ENCODE measurements at regions of chr10 and their contacts with region 1.

Region 1: DNA sequence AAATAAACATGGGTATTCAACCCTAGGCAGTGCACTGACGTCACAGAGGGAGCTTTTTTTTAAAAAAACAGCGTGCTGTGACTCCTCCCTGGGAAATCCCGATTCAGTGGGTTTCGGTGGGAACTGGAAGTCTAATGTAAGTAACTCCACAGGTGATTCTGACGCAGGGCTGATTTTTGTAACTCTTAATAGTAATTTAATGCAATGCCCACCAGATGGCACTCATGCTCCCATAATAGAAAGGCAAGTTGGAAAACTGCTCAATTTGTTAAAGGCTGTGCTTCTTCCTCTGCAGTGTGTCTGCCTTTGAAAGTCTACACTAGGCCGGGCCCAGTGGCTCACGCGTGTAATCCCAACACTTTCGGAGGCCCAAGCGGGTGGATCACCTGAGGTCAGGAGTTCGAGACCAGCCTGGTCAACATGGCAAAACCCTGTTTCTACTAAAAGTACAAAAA is 10.9 kb upstream of the RSU1 start:
- H3K4me3 ChIP-seq: no peak overlapping the region
- H3K27ac ChIP-seq: no peak overlapping the region
- H3K4me1 ChIP-seq: no peaks in the 10 kb centered on the region
- CTCF ChIP-seq: 0 out of 2 replicates have a peak, but pooled peaks have one; percentile 7

Region 2: DNA sequence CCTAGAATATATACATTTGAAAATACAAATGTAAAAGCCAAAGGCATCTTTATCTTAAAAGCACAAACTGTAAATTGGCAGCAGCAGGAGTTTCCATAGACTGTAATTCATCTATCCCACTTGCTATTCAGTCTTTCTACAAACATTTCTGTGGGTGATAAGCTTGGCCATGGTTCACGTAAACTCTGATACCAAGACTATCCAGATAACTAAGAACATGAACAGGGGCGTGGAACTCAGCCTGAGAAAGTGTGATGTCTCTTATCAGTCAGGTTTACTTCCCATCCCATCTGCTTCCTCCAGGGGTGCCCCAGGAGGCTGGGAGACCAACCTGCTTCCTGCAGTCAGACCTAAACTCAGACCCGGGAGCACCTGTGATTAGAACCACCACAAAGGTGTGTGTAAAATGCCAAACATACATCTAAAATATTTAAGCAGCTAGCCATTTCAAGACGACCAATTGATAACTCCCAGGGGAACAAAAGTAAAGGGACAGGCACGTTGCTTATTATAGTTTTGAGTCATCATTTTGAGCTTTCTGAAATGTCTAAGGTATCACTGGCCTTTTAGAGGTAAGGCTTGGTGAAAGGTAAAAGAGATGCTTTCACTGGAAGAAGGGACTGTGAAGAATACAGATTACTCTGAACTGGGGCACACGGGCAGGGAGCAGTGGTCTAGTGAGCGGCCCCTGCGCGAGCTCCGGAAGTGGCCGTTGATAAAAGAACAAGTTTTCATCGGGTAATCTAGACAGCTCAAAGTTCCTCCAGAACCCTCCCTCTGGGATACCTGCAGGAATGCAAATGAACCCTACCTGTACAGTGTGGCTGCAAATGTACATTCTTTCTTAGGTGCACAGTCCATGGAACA is 62.4 kb before region 1 on chr10:
- CTCF ChIA-PET with region 1: no interaction called
- POLR2A ChIA-PET with region 1: no interaction called
- H3K4me3 ChIP-seq: no peak overlapping the region
- H3K27ac ChIP-seq: no peak overlapping the region
- H3K4me1 ChIP-seq: no peaks in the 10 kb centered on the region
- CTCF ChIP-seq: no peak

Region 3: DNA sequence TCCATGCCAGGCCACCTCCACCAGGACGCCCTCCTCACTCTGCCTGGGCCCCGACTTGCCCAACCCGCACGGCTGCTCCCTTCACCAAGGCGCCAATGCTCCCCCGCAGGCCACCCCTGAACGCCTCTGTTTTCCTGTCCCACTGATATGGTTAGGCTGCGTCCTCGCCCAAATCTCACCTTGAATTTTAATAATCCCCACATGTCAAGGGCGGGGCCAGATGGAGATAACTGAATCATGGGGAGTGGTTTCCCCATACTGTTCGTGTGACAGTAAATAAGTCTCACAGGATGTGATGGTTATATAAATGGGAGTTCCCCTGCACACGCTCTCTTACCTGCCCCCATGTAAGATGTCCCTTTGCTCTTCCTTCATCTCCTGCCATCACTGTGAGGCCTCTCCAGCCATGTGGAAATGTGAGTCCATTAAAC is 40.8 kb before region 1 on chr10:
- CTCF ChIA-PET with region 1: no interaction called
- POLR2A ChIA-PET with region 1: no interaction called
- H3K4me3 ChIP-seq: no peak overlapping the region
- H3K27ac ChIP-seq: no peak overlapping the region
- H3K4me1 ChIP-seq: no peaks in the 10 kb centered on the region
- CTCF ChIP-seq: no peak

Region 4: DNA sequence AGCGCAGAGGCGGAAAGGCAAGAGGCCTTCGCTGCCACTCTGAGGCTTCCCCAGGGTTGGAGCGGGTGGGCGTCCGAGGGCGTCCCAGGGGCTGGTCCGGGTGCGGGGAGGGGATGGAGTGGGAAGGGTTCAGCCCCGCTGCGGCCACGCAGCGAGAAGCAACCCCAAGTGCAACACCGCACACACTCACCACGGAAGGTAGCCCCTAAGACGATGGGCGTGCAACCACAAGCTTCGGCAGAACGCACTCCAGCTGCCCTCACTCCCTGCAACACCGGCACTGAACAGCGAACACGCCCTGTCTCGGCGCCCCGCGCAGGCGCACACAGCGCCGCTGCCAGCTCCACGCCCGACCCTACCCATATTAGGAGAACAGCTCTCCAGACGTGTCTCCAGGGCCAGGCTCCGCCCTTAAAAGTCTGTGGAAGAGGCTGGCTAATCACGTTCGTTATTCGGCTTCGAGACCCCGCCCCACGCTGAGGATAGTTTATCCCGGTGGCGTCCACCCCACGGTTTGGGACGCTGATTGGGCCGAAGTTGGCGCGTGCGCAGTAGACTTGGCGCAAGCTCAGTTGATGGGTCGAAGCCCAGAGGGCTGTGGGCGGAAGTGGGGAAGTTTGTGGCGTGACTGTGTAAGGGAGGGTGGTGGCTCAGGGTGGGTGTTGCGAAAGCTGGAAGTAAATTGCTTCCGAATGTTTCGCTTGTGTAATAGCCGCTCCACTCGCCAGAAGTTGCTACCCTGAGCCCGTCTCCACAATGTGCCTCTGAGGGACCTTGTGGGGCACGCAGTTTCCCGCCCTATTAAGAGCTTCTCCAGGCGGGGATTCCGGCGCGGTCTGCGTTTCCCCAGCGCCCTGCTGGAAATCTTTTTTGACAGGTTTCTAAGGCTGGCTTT is 10.8 kb before region 1 on chr10 and contains the start of gene RSU1:
- CTCF ChIA-PET with region 1: interaction called, 10 read pairs
- POLR2A ChIA-PET with region 1: no interaction called
- H3K4me3 ChIP-seq: peak within 1 kb of the TSS; percentile 68
- H3K27ac ChIP-seq: peak within 1 kb of the TSS; percentile 72
- H3K4me1 ChIP-seq: peaks cover 3% of the 10 kb centered on the region
- CTCF ChIP-seq: no peak

Region 5: GRCh38 chr10:16848562-16849154 is 20.5 kb after region 1 on chr10:
- CTCF ChIA-PET with region 1: interaction called, 10 read pairs
- POLR2A ChIA-PET with region 1: no interaction called
- H3K4me3 ChIP-seq: no peak overlapping the region
- H3K27ac ChIP-seq: no peak overlapping the region
- H3K4me1 ChIP-seq: no peaks in the 10 kb centered on the region
- CTCF ChIP-seq: no peak